PC-9 (cell line): ENCODE measurements at regions of chr3 and their contacts with region 1.

Region 1: DNA sequence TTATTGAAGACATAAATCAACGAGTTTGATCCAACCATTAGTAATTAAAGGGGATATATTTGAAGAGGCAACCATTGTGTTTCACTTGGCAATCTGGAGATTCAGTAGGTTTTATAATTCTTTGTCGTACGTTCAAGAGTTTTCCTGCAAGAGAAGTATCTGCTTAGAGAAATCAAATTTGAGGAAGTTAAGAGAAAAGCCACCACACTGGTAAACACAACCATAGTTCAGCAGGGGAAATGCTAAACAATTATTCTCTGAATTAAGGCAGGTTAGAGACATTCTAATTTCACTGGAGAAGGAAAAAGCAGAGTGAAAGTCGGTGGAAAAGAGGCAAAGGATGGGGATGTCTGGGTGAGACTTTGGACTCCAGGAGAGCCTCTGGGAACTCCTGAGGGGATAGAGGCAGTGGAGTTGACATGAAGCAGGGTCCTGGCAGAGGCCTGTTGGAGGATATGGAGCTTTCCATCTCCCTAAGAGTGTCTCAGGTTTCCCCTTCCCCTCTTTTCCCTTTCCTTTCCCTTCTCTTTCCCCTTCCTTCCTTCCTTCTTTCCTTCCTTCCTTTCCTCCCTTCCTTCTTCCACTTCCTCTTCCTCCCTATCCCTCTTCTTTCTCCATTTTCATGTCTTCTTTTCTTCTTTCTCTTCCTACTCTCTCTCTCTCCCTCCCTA is 26.5 kb downstream of the SPINK8 start:
- DNase-seq: no peak
- H3K4me3 ChIP-seq: no peak overlapping the region
- H3K27ac ChIP-seq: no peak overlapping the region
- H3K4me1 ChIP-seq: no peaks in the 10 kb centered on the region
- H3K27me3 ChIP-seq: no peaks in the 10 kb centered on the region
- CTCF ChIP-seq: no peak

Region 2: GRCh38 chr3:48514436-48515227 is 207.6 kb after region 1 on chr3:
- CTCF ChIA-PET with region 1: no interaction called
- POLR2A ChIA-PET with region 1: interaction called, 21 read pairs
- intact Hi-C with region 1: no loop called
- DNase-seq: peak; percentile 17 to 67
- H3K4me3 ChIP-seq: no peak overlapping the region
- H3K27ac ChIP-seq: no peak overlapping the region
- H3K4me1 ChIP-seq: peaks cover 12% of the 10 kb centered on the region
- H3K27me3 ChIP-seq: no peaks in the 10 kb centered on the region
- CTCF ChIP-seq: no peak